PC-9 (cell line): ENCODE measurements at regions of chr16 and their contacts with region 1.

Region 1: DNA sequence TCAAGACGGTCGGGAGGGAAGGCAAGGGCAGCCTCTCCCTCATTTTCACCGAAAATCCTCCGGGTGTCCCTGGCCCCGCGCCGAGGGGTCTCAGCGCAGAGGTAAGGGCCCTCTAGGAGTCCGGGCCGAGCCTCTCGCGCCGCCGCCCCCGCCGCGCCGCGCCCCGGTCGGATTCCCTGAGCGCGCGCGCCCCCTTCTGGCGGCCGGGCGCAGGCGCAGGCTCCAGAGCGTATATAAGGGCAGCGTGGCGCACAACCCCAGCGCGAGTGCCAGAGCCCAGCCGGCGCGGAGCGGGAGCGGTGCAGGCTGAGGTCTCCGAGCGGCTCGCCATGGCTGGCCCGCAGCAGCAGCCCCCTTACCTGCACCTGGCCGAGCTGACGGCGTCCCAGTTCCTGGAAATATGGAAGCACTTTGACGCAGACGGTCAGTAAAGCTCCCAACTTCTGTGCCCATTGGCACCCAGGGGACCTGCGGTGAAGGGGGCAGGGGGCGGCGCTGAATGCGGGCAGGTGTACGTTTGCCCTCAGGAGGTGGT is at the start of gene CALB2:
- DNase-seq: peak; percentile 35 to 82
- H3K4me3 ChIP-seq: peak within 1 kb of the TSS; percentile 99
- H3K27ac ChIP-seq: peak within 1 kb of the TSS; percentile 85
- H3K4me1 ChIP-seq: peaks cover 37% of the 10 kb centered on the region
- H3K27me3 ChIP-seq: no peaks in the 10 kb centered on the region
- CTCF ChIP-seq: peak; percentile 84
- total RNA-seq, gene CALB2: 107 and 135 TPM in 2 replicates

Region 2: GRCh38 chr16:70695331-70696070 is 663.0 kb before region 1 on chr16:
- CTCF ChIA-PET with region 1: no interaction called
- POLR2A ChIA-PET with region 1: no interaction called
- intact Hi-C with region 1: loop called (anchors 5 kb)
- DNase-seq: peak; percentile 62 to 70
- H3K4me3 ChIP-seq: no peak overlapping the region
- H3K27ac ChIP-seq: peak overlapping the region; percentile 79
- H3K4me1 ChIP-seq: peaks cover 63% of the 10 kb centered on the region
- H3K27me3 ChIP-seq: no peaks in the 10 kb centered on the region
- CTCF ChIP-seq: no peak

Region 3: DNA sequence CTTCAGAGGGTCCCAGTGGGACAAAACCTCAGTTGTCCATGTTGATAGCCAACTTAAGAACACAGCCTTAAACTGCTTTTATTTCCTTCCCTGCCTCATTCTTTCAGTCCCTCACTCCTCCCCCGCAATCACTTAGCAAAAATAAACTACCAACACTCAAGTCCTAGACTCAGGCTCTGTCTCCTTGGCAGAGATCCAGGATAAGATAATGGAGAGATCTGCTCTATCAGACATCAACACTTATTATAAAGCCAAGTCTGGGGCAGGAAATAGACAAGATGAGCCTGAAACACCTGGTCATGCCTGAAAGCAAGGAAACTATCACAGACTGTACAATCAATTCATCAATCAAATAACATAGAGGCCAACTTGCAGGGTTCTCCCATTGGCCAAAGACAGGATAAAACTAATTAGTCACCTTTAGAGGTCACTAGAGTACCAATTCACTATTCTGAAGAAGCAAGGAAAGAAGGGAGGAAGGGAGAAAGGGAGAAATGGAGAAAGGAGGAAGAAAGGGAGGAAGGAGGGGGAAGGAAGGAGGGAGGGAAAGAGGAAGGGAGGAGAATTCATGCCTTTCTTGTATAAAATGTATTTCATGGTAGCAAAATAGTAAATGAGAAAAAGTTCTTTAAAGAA is 143.7 kb before region 1 on chr16:
- CTCF ChIA-PET with region 1: no interaction called
- POLR2A ChIA-PET with region 1: interaction called, 3 read pairs
- intact Hi-C with region 1: loop called (anchors 1 kb)
- DNase-seq: no peak
- H3K4me3 ChIP-seq: no peak overlapping the region
- H3K27ac ChIP-seq: no peak overlapping the region
- H3K4me1 ChIP-seq: no peaks in the 10 kb centered on the region
- H3K27me3 ChIP-seq: no peaks in the 10 kb centered on the region
- CTCF ChIP-seq: no peak

Region 4: GRCh38 chr16:71230122-71230845 is 128.2 kb before region 1 on chr16 and contains the start of gene HYDIN:
- CTCF ChIA-PET with region 1: no interaction called
- POLR2A ChIA-PET with region 1: no interaction called
- intact Hi-C with region 1: loop called (anchors 5 kb)
- DNase-seq: peak; percentile 83 to 90
- H3K4me3 ChIP-seq: peak within 1 kb of the TSS; percentile 81
- H3K27ac ChIP-seq: no peak within 1 kb of the TSS
- H3K4me1 ChIP-seq: peaks cover 6% of the 10 kb centered on the region
- H3K27me3 ChIP-seq: no peaks in the 10 kb centered on the region
- CTCF ChIP-seq: no peak
- total RNA-seq, gene HYDIN: 25.9 and 31.0 TPM in 2 replicates

Region 5: GRCh38 chr16:71276589-71277334 is 81.8 kb before region 1 on chr16:
- CTCF ChIA-PET with region 1: no interaction called
- POLR2A ChIA-PET with region 1: no interaction called
- intact Hi-C with region 1: no loop called
- DNase-seq: no peak
- H3K4me3 ChIP-seq: no peak overlapping the region
- H3K27ac ChIP-seq: no peak overlapping the region
- H3K4me1 ChIP-seq: no peaks in the 10 kb centered on the region
- H3K27me3 ChIP-seq: no peaks in the 10 kb centered on the region
- CTCF ChIP-seq: no peak

Region 6: DNA sequence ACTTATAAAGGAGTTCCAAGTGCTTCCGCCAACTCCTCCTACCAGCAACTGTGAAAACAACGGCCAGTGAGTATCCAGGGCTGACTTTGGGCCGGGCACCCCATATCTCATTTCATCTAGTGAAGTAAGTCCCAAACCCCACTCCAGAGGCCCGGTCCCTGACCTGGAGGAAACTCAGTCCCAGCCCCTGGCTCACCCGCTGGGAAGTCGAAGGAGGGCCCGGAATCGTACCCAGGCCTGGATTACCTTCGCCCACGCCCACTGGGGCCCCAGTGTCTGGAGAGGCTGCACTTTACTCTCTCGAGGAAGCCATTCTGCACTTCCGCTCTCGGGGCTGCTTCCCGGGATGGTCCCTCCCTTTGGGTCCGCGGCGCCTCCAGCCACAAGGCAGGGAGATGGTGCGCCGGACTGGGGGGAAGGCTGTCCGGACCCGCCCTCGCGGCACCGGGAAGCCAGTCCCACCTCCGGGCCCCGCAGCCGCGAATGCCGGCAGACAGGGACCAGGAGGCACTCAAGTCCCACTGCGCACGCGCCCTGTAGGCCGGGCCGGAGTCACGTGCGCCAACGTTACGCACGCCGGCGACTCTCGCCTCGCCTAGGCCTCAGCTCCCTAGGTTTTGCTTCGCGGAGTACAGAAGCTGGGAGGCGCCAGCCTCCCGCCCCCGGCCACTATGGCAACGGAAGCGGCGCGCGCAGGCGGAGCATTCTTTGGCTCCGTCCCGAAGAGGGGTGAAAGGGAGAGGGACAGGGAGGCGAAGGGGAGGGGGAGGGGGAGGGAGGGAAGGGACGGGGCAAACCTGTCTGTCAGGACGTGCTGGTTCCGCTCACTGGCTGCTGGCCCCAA is 69.4 kb before region 1 on chr16 and contains the start of gene CMTR2:
- CTCF ChIA-PET with region 1: no interaction called
- POLR2A ChIA-PET with region 1: no interaction called
- intact Hi-C with region 1: loop called (anchors 2 kb)
- DNase-seq: peak; percentile 95 to 97
- H3K4me3 ChIP-seq: peak within 1 kb of the TSS; percentile 67
- H3K27ac ChIP-seq: peak within 1 kb of the TSS; percentile 93
- H3K4me1 ChIP-seq: peaks cover 35% of the 10 kb centered on the region
- H3K27me3 ChIP-seq: no peaks in the 10 kb centered on the region
- CTCF ChIP-seq: no peak
- total RNA-seq, gene CMTR2: 30.4 and 36.2 TPM in 2 replicates

Region 7: GRCh38 chr16:71338193-71338592 is 20.3 kb before region 1 on chr16:
- CTCF ChIA-PET with region 1: interaction called, 3 read pairs
- POLR2A ChIA-PET with region 1: interaction called, 4 read pairs
- intact Hi-C with region 1: loop called (anchors 1 kb)
- DNase-seq: peak; percentile 82 to 98
- H3K4me3 ChIP-seq: no peak overlapping the region
- H3K27ac ChIP-seq: peak overlapping the region; percentile 100
- H3K4me1 ChIP-seq: peaks cover 47% of the 10 kb centered on the region
- H3K27me3 ChIP-seq: no peaks in the 10 kb centered on the region
- CTCF ChIP-seq: no peak

Region 8: GRCh38 chr16:71344315-71344905 is 14.1 kb before region 1 on chr16:
- CTCF ChIA-PET with region 1: interaction called, 3 read pairs
- POLR2A ChIA-PET with region 1: interaction called, 15 read pairs
- intact Hi-C with region 1: loop called (anchors 1 kb)
- DNase-seq: peak; percentile 48 to 77
- H3K4me3 ChIP-seq: peak overlapping the region; percentile 26; the same call in 1 of the 2 replicates
- H3K27ac ChIP-seq: peak overlapping the region; percentile 63
- H3K4me1 ChIP-seq: peaks cover 27% of the 10 kb centered on the region
- H3K27me3 ChIP-seq: no peaks in the 10 kb centered on the region
- CTCF ChIP-seq: no peak